GM10248 (cell line): ENCODE measurements at regions of chr10 and their contacts with region 1.

Region 1: DNA sequence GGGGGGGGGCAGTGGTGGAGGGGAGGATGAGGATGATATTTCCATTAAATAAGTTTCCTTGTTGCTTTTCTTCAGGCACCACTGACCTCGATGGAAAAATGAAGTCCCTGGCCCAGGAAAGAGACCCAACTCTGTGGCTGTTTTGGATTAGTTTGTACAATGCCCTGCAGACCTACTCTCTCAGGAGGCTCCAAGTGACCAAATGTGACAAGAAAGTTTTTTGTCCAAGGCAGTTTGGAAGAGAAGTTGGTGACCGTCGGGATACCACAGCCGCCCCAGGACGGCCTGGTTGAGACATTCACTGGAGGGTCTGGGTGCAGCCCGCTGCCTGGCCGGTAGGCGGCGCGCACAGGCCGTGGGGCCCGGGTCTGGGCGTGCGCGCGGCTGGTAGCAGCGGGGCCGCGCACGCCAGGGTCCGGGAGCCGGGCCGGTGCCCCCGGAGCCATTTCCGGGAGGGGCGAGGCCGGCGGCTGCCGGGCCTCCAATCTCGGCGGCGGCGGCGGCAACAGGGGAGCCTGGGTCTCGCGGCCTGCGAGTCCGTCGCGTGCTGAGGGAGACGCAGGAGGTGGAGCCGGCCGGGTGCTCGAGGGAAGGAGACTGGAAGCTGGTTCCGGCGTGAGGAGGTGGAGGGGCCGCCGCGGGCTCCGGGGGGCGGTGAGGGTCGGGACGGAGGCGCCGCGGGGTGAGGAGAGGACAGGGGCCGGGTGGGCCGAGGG is at the start of gene SGPL1:
- DNase-seq: peak; percentile 98
- CTCF ChIP-seq: peak; percentile 99

Region 2: DNA sequence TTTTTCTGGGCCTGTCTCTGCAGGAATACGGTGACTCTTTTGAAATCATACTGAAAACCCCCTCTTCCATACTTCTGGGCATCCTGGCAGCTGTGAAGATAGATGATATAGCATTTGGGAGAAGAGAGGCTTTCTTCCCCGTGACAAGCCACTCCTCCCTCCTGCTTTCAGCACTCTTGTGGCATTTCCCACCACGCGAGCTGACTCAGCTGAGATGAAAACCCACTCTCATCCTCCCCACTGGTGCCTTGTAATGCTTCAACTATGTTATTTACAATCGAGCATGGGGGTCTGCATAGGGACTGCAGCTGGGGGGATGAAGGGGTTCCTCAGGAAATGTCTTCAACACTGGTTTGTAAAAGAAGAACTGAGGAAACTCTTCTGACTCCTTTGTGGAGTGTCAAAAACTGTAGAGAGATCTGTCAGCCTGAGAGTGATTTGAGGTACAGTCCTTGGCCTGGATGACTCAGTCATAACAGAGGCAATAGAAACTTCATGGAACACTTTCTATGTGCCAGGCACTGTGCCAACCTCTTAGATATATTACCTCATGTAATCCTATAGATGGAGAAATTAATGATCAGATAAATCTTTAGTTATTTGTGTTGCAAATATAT is 28.8 kb before region 1 on chr10:
- CTCF ChIA-PET with region 1: no interaction called
- POLR2A ChIA-PET with region 1: no interaction called
- DNase-seq: no peak
- CTCF ChIP-seq: no peak

Region 3: GRCh38 chr10:70832852-70833528 is 17.3 kb after region 1 on chr10:
- CTCF ChIA-PET with region 1: interaction called, 11 read pairs
- POLR2A ChIA-PET with region 1: no interaction called
- DNase-seq: no peak
- CTCF ChIP-seq: no peak

Region 4: GRCh38 chr10:70858759-70859158 is 43.1 kb after region 1 on chr10:
- CTCF ChIA-PET with region 1: interaction called, 11 read pairs
- POLR2A ChIA-PET with region 1: no interaction called
- DNase-seq: no peak
- CTCF ChIP-seq: no peak

Region 5: DNA sequence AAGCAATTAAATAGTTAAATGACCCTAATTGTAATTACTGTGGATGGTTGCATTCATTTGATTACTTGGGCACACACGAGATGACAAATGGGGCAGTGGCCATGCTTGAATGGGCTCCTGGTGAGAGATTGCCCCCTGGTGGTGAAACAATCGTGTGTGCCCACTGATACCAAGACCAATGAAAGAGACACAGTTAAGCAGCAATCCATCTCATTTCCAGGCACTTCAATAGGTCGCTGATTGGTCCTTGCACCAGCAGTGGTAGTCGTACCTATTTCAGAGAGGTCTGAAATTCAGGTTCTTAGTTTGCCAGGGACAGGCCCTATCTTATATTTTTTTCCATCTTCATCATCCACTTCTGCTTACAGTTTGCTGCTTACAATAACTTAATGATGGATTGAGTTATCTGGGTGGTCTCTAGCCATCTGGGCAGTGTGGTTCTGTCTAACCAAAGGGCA is 64.4 kb after region 1 on chr10:
- CTCF ChIA-PET with region 1: interaction called, 21 read pairs
- POLR2A ChIA-PET with region 1: no interaction called
- DNase-seq: peak; percentile 78
- CTCF ChIP-seq: peak; percentile 91